SK-MEL-5 (cell line): ENCODE measurements at regions of chr1 and their contacts with region 1.

Region 1: GRCh38 chr1:91500756-91501522 is at the start of gene CDC7:
- DNase-seq: peak; percentile 88
- total RNA-seq, gene CDC7: 9.3 and 9.9 TPM in 2 replicates

Region 2: DNA sequence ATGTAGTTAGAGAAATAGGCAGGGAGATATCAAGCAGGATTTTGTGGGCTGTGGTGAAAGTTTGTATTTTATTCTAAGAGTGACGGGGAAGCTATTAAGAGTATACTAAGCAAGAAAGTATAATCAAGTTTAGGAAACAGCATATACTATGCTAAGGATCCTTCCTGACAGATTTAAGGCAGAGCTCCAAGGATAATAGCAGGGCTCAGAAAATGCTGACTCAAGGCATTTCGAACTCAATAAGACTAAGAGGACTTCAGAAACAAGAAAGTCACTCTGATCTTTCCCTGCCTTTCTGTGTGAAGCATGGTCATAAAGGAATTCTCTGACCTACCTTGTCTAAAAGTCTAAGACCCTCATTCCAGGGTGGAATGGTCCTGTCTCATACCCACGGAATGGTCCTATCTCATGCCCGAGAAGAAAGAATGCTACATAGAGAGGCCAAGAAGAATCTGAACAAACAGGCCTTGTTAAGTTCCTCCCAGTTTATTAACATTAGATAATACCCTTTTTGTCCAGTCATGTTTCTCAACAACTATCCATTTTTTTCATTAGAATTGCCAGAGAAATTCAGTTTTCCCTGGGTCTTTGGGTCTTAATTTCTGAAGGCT is 155.4 kb before region 1 on chr1:
- in situ Hi-C with region 1: no loop called
- DNase-seq: peak; percentile 87

Region 3: DNA sequence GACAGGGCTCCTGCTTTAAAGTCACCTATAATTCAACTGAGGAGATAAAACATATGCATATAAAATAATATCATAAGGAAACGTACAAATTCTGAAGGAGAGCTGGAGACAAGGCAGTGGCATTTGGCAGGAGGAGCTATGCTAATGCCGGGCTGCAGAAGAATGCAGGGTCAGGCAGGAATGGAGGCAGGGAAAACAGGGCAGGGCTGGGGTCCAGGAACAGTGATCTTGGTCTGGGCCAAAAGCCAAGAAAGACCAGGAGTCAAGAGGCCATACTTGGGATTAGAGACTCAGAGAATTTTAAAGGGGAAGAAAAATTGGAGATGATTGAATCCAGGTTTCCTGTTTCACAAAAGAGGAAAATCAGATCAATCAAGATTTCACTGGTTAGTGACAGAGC is 428.3 kb after region 1 on chr1:
- in situ Hi-C with region 1: loop called (anchors 25 kb)
- DNase-seq: no peak